Posterior vena cava (tissue), 2 donors: ENCODE measurements at regions of chr12 and their contacts with region 1.

Region 1: DNA sequence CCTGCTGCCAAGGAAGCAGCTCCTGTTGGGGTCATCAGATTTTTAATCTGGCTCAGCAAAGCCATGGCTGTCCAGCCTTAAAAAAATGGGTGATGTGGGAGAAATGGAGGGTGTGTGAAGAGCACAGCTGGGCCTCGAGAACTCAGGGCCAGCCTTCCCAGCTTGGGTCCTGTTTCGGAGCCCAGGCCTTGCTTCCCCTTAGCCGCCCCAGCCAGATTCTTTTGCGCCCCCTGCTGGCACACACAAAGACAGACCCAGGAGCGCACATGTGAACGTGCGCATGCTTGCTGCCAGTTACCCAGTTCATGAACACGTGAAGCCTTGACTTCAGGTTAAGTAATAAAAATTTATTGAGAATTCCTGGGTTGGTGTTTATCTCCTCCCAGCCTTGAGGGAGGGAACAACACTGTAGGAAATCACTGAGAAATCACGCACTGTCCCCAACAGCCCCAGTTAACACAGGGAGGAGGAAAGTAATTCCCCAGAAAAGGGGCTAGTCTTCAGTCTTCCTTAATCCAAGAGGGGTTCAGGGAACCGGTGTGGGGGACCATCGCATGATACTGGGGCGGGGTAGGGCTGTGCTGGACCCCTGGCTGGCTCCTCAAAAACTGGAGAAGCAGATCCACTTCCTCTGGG is 5.3 kb downstream of the PHB2 start:
- DNase-seq: peak; percentile 96

Region 2: DNA sequence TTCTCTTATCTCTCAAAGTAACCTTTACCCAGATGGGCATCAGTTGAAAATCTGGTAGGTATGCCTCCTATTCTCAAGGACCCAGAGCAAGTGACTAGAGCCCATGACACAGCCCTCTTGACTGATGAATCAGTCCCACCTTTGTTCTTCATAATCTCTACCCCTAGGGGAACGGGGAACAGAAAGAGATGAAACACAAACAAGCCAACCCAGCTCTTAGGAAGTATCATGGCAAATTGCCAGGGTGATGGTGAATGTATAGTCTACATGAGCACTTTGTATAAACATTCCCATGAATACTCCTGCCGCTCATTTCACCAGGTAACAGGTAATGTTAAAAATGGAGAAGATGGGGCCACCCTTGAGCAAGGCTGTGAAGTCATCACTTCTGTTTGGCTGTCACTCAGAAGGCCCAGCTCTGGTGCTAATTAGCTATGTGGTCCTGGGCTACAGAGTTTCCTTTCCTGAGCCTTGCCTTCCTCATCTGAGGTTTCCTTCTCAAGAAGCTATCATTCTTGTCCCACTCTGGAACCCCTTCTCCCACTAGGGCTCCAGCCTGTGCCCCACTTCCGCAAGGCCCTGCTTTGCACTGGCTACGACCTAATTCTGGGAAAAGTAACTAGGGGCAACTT is 1181.7 kb before region 1 on chr12:
- intact Hi-C with region 1: no loop called
- DNase-seq: no peak

Region 3: GRCh38 chr12:6927379-6928024 is 37.6 kb before region 1 on chr12 and contains the start of gene ATN1:
- intact Hi-C with region 1: loop called in 1 of 2 experiments (anchors 2 kb)
- DNase-seq: peak; percentile 94
- total RNA-seq, gene ATN1: 97.0 to 106 TPM

Region 4: GRCh38 chr12:7017858-7018349 is 52.8 kb after region 1 on chr12:
- intact Hi-C with region 1: loop called in 1 of 2 experiments (anchors 2 kb)
- DNase-seq: no peak

Region 5: DNA sequence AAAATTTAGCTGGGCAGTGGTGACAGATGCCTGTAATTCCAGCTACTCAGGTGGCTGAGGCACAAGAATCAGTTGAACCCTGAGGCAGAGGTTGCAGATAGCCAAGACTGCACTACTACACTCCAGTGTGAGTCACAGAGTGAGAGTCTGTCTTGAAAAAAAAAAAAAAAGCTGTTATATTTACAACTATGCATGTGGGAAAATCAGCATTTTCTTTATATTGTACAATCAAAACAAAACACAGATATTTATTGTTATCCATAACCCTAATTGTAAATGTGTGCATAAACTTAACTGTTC is 114.6 kb after region 1 on chr12:
- intact Hi-C with region 1: loop called in 1 of 2 experiments (anchors 10 kb)
- DNase-seq: no peak

Region 6: DNA sequence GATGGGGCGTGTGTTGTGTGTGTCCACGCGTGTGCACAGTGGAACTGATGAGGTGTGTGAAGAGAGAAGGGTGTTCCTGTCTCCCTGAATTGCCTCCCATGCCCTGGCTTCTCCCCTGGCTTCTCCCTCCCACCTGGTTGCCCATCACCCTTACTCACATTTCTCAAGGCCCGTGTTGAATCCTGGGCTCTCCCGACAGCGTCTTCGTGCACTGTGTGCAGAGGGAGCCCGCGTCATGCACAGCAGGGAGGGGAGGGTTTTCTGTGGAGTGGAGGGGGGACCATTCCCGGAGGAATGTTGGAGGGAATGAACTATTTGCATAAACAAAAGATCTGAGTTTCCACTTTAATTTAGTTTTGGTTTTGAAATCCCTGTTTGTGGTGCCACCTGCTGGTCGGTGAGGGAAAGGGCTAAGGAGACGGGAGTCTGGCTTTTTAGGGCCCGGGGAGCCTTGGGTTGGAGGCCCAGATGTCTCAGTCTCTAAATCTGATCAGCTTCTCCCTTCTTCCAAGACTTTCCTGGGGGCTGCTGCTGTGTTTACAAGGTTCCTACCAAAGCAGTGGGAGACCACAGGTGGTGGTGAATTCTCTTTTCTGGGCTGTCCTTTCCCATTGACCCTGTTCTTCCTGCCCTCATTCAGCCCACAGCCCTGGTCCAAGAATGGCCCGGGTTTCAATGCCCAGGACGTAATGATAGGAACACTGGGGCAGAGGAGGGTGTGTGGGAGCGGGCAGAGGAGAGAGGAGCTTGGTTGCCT is 127.3 kb after region 1 on chr12 and contains the start of gene C1R:
- intact Hi-C with region 1: loop called (anchors 10 kb)
- DNase-seq: peak; percentile 96
- total RNA-seq, gene C1R: 1,008 to 1,686 TPM